Prostate gland (tissue), 2 donors: ENCODE measurements at regions of chr9 and their contacts with region 1.

Region 1: GRCh38 chr9:27945388-27945787 is 372.1 kb upstream of the C9orf72 start:
- DNase-seq: no peak
- H3K4me3 ChIP-seq: no peak overlapping the region
- H3K27ac ChIP-seq: no peak overlapping the region
- H3K4me1 ChIP-seq: no peaks in the 10 kb centered on the region
- H3K27me3 ChIP-seq: no peaks in the 10 kb centered on the region
- CTCF ChIP-seq: no peak
- POLR2A ChIP-seq: no peak

Region 2: GRCh38 chr9:27726244-27727081 is 218.9 kb before region 1 on chr9:
- intact Hi-C with region 1: no loop called
- DNase-seq: peak; percentile 42
- H3K4me3 ChIP-seq: no peak overlapping the region
- H3K27ac ChIP-seq: no peak overlapping the region
- H3K4me1 ChIP-seq: no peaks in the 10 kb centered on the region
- H3K27me3 ChIP-seq: no peaks in the 10 kb centered on the region
- CTCF ChIP-seq: peak; percentile 19 to 67 (median 53)
- POLR2A ChIP-seq: no peak

Region 3: DNA sequence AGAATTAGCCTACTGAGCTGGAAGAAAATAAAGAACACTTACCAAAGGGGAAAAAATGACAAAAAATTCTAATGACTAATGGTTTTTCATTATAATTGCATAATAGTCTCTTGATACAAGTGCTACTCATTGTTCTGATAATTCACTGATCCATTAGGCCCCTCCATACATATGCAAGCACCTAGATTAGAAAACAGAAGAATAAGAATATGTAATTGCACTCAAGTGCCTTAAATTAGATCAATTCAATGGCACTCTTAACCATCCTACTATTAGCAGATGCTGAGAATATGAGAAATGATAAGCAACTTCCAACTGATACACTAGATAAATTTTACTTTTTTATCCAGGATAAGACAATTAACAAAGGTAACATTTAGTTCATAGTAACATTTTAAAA is 68.8 kb after region 1 on chr9:
- intact Hi-C with region 1: loop called (anchors 10 kb)
- DNase-seq: no peak
- H3K4me3 ChIP-seq: no peak overlapping the region
- H3K27ac ChIP-seq: no peak overlapping the region
- H3K4me1 ChIP-seq: no peaks in the 10 kb centered on the region
- H3K27me3 ChIP-seq: no peaks in the 10 kb centered on the region
- CTCF ChIP-seq: no peak
- POLR2A ChIP-seq: no peak